GM12878 (cell line): ENCODE measurements at regions of chrX and their contacts with region 1.

Region 1: GRCh38 chrX:134764212-134764785 is 106.0 kb upstream of the PLAC1 start:
- DNase-seq: no peak
- ATAC-seq: peak; percentile 92
- H3K4me3 ChIP-seq: no peak overlapping the region
- H3K27ac ChIP-seq: no peak overlapping the region
- H3K4me1 ChIP-seq: no peaks in the 10 kb centered on the region
- H3K27me3 ChIP-seq: no peaks in the 10 kb centered on the region
- CTCF ChIP-seq: peak in 2 of 3 experiments; percentile 25 to 27; a peak in 2 of 6 replicates
- EP300 ChIP-seq: no peak
- POLR2A ChIP-seq: no peak
- RAD21 ChIP-seq: no peak

Region 2: DNA sequence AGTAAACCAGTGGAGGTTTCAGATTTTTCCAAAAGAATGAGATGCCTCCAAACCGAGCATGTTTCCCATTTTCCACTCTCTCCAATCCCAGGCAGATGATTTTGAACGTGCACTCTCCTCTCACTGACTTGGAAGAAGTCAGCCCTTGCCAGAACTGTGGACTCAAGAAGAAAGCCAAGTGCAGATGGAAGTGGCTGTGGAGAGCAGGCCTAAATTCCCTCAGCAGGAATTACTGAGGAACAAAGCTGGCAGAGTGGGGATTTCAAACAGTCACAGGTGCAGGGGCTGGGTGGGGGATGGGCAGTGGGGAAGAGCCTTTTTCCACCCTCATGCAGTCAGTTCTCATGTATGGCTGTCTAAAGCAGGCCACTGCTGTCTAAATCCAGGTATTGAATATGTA is 22.6 kb before region 1 on chrX:
- CTCF ChIA-PET with region 1: interaction called, 4 read pairs
- POLR2A ChIA-PET with region 1: interaction called, 3 read pairs
- RAD21 ChIA-PET with region 1: no interaction called
- SMC1A ChIA-PET with region 1: no interaction called
- in situ Hi-C with region 1: no loop called
- intact Hi-C with region 1: loop called (anchors 1 kb)
- DNase-seq: no peak
- ATAC-seq: no peak
- H3K4me3 ChIP-seq: no peak overlapping the region
- H3K27ac ChIP-seq: no peak overlapping the region
- H3K4me1 ChIP-seq: 0 out of 2 replicates have a peak, but pooled peaks cover 3% of the 10 kb centered on the region
- H3K27me3 ChIP-seq: no peaks in the 10 kb centered on the region
- CTCF ChIP-seq: no peak
- EP300 ChIP-seq: no peak
- POLR2A ChIP-seq: no peak
- RAD21 ChIP-seq: no peak

Region 3: DNA sequence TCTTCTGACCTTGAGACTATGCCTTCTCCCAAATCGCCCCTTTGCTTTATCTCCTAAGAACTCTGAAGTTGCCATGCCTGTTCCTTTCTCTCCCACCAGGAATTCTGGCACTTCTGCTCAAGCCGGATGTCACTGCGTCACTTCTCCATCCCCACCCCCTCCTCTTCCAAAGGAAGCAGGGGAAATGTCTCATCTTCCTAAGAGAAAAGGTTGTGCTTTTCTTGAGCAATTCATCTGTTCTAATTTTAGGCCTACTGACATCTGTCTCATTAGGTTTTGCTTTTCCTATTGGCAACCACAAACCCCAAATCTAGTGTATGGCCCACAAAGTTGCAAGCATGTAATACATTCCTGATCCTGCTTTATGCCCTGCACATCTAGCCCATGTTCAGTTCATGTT is 57.1 kb after region 1 on chrX:
- CTCF ChIA-PET with region 1: no interaction called
- POLR2A ChIA-PET with region 1: no interaction called
- RAD21 ChIA-PET with region 1: no interaction called
- SMC1A ChIA-PET with region 1: no interaction called
- in situ Hi-C with region 1: no loop called
- intact Hi-C with region 1: no loop called
- DNase-seq: no peak
- ATAC-seq: no peak
- H3K4me3 ChIP-seq: no peak overlapping the region
- H3K27ac ChIP-seq: no peak overlapping the region
- H3K4me1 ChIP-seq: no peaks in the 10 kb centered on the region
- H3K27me3 ChIP-seq: no peaks in the 10 kb centered on the region
- CTCF ChIP-seq: no peak
- EP300 ChIP-seq: no peak
- POLR2A ChIP-seq: no peak
- RAD21 ChIP-seq: no peak